ENCODE measurements at regions of chr10 and their contacts with region 1.

Region 1: GRCh38 chr10:79068562-79069324 is at the start of gene ZMIZ1:
- H3K4me3 Mint-ChIP-seq: peak within 1 kb of the TSS; percentile 93
- H3K27ac Mint-ChIP-seq: peak within 1 kb of the TSS; percentile 89
- H3K4me1 Mint-ChIP-seq: peaks cover 57% of the 10 kb centered on the region
- H3K27me3 Mint-ChIP-seq: peaks cover 2% of the 10 kb centered on the region

Region 2: GRCh38 chr10:78852466-78853240 is 216.1 kb before region 1 on chr10:
- intact Hi-C with region 1: loop called (anchors 5 kb)
- H3K4me3 Mint-ChIP-seq: no peak overlapping the region
- H3K27ac Mint-ChIP-seq: no peak overlapping the region
- H3K4me1 Mint-ChIP-seq: no peaks in the 10 kb centered on the region
- H3K27me3 Mint-ChIP-seq: peaks cover 10% of the 10 kb centered on the region

Region 3: GRCh38 chr10:78973901-78974616 is 94.7 kb before region 1 on chr10:
- intact Hi-C with region 1: loop called (anchors 2 kb)
- H3K4me3 Mint-ChIP-seq: peak overlapping the region; percentile 77
- H3K27ac Mint-ChIP-seq: peak overlapping the region; percentile 87
- H3K4me1 Mint-ChIP-seq: peaks cover 76% of the 10 kb centered on the region
- H3K27me3 Mint-ChIP-seq: peaks cover 2% of the 10 kb centered on the region

Region 4: GRCh38 chr10:79084012-79084971 is 15.5 kb after region 1 on chr10:
- intact Hi-C with region 1: loop called (anchors 2 kb)
- H3K4me3 Mint-ChIP-seq: peak overlapping the region; percentile 69
- H3K27ac Mint-ChIP-seq: peak overlapping the region; percentile 81
- H3K4me1 Mint-ChIP-seq: peaks cover 98% of the 10 kb centered on the region
- H3K27me3 Mint-ChIP-seq: no peaks in the 10 kb centered on the region

Region 5: GRCh38 chr10:79105150-79105739 is 36.5 kb after region 1 on chr10:
- intact Hi-C with region 1: loop called (anchors 5 kb)
- H3K4me3 Mint-ChIP-seq: no peak overlapping the region
- H3K27ac Mint-ChIP-seq: no peak overlapping the region
- H3K4me1 Mint-ChIP-seq: peaks cover 90% of the 10 kb centered on the region
- H3K27me3 Mint-ChIP-seq: peaks cover 3% of the 10 kb centered on the region

Region 6: GRCh38 chr10:79195091-79195923 is 126.6 kb after region 1 on chr10:
- intact Hi-C with region 1: loop called (anchors 5 kb)
- H3K4me3 Mint-ChIP-seq: no peak overlapping the region
- H3K27ac Mint-ChIP-seq: no peak overlapping the region
- H3K4me1 Mint-ChIP-seq: peaks cover 47% of the 10 kb centered on the region
- H3K27me3 Mint-ChIP-seq: no peaks in the 10 kb centered on the region